ENCODE measurements at regions of chr1 and their contacts with region 1.

Region 1: DNA sequence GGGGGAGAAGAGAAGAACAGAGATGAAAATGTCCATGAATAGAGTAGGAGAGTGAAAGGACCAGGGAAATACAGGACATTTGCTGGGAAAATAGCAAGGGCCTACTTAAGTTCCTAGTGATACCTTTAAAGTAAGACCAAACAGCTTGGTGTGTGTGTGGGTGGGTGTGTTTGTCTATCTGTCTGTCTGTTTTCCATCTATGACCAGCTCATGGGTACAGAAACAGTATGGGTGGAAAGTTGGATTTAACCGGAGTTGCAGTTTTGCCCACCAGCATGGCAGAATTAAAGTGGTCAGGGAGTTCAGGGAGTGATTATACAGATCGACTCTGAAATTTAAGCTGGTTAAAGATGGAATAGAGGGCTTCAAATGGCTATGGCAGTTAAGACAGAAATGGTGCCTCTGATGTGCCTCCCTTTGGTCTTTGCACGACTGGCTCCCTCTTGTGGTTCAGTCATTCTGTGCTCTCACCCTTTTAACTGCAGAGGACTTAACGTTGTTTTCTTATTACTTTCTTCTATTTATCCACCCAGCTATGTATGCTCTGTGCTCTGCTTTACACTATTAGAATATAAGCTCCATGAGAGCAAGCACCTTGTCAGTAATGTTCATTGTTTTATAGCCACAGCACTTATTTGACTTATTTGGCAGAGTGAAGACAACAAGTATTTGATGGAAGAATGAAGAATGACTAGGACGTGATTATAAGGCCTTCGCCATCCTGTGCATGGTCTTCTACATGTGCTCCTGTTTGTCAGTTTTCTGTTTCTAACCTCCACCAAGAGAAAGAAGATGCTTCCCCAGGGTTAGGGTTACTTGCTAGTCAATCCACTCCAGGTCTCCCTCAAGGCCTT is 72.7 kb upstream of the AK4 start:
- DNase-seq: peak; percentile 72
- CTCF ChIP-seq: peak; percentile 70

Region 2: GRCh38 chr1:65209005-65209885 is 133.9 kb after region 1 on chr1:
- in situ Hi-C with region 1: loop called (anchors 10 kb)
- DNase-seq: peak; percentile 57
- CTCF ChIP-seq: peak; percentile 28

Region 3: GRCh38 chr1:65357291-65357960 is 282.1 kb after region 1 on chr1:
- in situ Hi-C with region 1: no loop called
- DNase-seq: no peak
- CTCF ChIP-seq: no peak